ENCODE measurements at regions of chr5 and their contacts with region 1.

Region 1: GRCh38 chr5:77015938-77016569 is 14.2 kb upstream of the AGGF1 start:
- DNase-seq: peak; percentile 71
- H3K4me3 ChIP-seq: no peak overlapping the region
- H3K27ac ChIP-seq: no peak overlapping the region
- H3K4me1 ChIP-seq: no peaks in the 10 kb centered on the region
- H3K27me3 ChIP-seq: peaks cover 5% of the 10 kb centered on the region
- CTCF ChIP-seq: peak; percentile 51

Region 2: DNA sequence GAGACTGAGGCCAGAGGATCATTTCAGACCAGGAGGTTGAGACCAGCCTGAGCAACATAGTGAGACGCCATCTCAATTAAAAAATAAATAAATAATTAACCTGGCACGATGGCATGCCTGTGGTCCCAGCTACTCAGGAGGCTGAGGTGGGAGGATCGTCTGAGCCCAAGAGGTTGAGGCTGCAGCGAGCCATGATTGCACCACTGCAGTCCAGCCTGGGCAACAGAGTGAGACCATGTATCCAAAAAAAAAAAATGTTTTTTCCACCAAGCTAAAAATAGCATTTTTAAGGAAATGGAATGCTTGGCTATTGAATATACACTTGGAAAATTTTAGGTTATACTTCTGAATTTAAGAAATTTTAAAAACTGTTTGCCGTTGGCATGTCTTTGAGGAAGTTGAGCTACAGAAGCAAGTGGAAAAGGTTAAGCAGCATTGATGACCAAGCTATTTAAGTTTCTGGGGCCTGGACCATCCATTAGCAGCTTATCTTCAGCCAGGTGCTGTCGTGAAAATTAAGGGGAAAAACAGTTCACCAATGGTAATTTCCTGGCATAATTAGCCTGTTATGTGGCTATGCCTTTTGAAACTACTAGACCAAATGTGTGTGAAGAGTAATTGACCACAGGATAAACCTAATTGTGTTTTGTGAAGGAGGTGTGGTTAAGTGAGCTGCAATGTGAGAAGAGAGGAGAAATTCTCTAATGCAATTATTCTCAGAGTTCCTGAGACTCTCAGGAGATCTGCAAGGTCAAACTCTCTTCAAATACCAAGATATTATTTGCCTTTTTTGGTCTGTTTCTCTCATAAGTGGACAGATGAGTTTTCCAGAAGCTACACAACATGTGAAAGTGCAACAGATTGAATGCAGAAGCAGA is 279.1 kb before region 1 on chr5:
- CTCF ChIA-PET with region 1: interaction called, 10 read pairs
- POLR2A ChIA-PET with region 1: no interaction called
- intact Hi-C with region 1: no loop called
- DNase-seq: no peak
- H3K4me3 ChIP-seq: no peak overlapping the region
- H3K27ac ChIP-seq: no peak overlapping the region
- H3K4me1 ChIP-seq: peaks cover 36% of the 10 kb centered on the region
- H3K27me3 ChIP-seq: no peaks in the 10 kb centered on the region
- CTCF ChIP-seq: no peak

Measured in A673 (cell line).